MCF 10A (cell line): ENCODE measurements at regions of chr10 and their contacts with region 1.

Region 1: DNA sequence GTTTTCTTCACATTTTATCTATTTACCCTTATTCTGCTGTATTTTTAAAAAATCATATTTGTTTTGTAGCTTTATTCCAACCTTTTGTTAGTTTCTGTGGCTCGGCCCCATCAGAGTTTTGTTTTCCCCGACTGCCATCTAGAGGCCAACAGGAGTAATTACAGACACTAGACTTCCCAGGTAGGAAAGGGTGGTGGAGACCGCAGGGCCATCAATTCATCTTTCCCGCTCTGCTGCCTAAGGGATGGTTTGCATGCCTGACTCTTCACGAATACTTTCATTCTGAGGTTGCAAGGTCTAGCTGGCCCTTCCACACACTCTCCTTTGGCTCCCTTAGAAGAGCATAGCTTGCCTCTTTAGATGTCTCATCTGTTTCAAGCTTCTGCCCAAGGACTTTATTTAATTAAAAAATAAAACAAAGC is 38.3 kb downstream of the LYZL2 start:
- DNase-seq: peak; percentile 77
- H3K4me3 Mint-ChIP-seq: no peak overlapping the region
- H3K27ac Mint-ChIP-seq: no peak overlapping the region
- H3K4me1 Mint-ChIP-seq: no peaks in the 10 kb centered on the region
- H3K27me3 Mint-ChIP-seq: peaks cover 39% of the 10 kb centered on the region
- CTCF ChIP-seq: peak; percentile 56

Region 2: DNA sequence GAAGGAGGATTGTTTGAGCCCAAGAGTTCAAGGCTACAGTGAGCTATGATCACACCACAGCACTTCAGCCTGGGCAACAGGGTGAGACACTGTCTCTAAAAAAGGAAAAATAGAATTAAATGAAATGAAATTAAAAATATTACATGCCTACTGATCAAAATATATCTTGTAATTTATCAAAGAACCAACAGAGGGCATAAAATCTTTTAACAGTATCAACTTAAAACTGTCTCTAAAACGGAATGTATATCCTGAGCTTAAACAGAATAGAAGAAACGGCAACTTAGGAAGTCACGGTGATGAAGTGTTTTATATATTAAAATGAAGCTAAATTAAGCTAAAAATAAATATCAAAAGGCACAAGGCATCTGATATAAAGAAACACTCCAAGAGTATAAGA is 321.0 kb before region 1 on chr10:
- CTCF ChIA-PET with region 1: interaction called, 13 read pairs
- POLR2A ChIA-PET with region 1: no interaction called
- intact Hi-C with region 1: loop called (anchors 10 kb)
- DNase-seq: no peak
- H3K4me3 Mint-ChIP-seq: no peak overlapping the region
- H3K27ac Mint-ChIP-seq: no peak overlapping the region
- H3K4me1 Mint-ChIP-seq: no peaks in the 10 kb centered on the region
- H3K27me3 Mint-ChIP-seq: peaks cover 56% of the 10 kb centered on the region
- CTCF ChIP-seq: no peak

Region 3: GRCh38 chr10:30359373-30360206 is 231.7 kb before region 1 on chr10:
- CTCF ChIA-PET with region 1: interaction called, 12 read pairs
- POLR2A ChIA-PET with region 1: no interaction called
- intact Hi-C with region 1: loop called (anchors 1 kb)
- DNase-seq: peak; percentile 75
- H3K4me3 Mint-ChIP-seq: no peak overlapping the region
- H3K27ac Mint-ChIP-seq: no peak overlapping the region
- H3K4me1 Mint-ChIP-seq: peaks cover 20% of the 10 kb centered on the region
- H3K27me3 Mint-ChIP-seq: peaks cover 23% of the 10 kb centered on the region
- CTCF ChIP-seq: peak; percentile 81

Region 4: GRCh38 chr10:30392564-30392990 is 198.7 kb before region 1 on chr10:
- CTCF ChIA-PET with region 1: interaction called, 77 read pairs
- POLR2A ChIA-PET with region 1: interaction called, 4 read pairs
- intact Hi-C with region 1: loop called (anchors 1 kb)
- DNase-seq: peak; percentile 77
- H3K4me3 Mint-ChIP-seq: no peak overlapping the region
- H3K27ac Mint-ChIP-seq: no peak overlapping the region
- H3K4me1 Mint-ChIP-seq: peaks cover 14% of the 10 kb centered on the region
- H3K27me3 Mint-ChIP-seq: no peaks in the 10 kb centered on the region
- CTCF ChIP-seq: peak; percentile 98

Region 5: DNA sequence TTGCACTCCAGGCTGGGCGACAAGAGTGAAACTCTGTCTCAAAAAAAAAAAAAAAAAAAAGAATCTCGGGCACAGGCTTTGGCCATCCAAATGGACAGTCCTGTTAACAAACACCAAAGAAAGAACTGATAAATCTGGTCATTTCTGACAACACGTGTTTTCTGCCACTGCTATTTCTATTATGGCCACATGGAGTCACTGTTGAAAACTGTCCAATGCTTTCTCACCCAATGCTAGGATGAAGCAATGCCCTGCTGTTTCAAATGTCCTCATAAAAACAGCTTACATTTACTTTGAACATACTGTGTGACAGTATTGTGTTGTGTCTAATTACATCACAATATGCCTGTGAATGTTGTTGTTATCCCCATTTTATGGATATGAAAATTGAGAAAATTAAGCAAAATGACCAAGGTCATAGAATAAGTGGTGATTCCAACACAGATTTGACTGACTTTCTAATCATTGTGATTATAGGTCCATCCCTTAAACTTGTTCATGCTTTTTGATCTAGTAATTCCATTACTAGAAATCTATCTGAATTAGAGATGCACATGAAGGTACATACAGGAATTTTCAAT is 177.2 kb before region 1 on chr10:
- CTCF ChIA-PET with region 1: interaction called, 7 read pairs
- POLR2A ChIA-PET with region 1: no interaction called
- intact Hi-C with region 1: loop called (anchors 1 kb)
- DNase-seq: peak; percentile 76
- H3K4me3 Mint-ChIP-seq: no peak overlapping the region
- H3K27ac Mint-ChIP-seq: no peak overlapping the region
- H3K4me1 Mint-ChIP-seq: no peaks in the 10 kb centered on the region
- H3K27me3 Mint-ChIP-seq: no peaks in the 10 kb centered on the region
- CTCF ChIP-seq: peak; percentile 62

Region 6: GRCh38 chr10:30534465-30535144 is 56.7 kb before region 1 on chr10:
- CTCF ChIA-PET with region 1: interaction called, 6 read pairs
- POLR2A ChIA-PET with region 1: no interaction called
- intact Hi-C with region 1: loop called (anchors 2 kb)
- DNase-seq: peak; percentile 77
- H3K4me3 Mint-ChIP-seq: no peak overlapping the region
- H3K27ac Mint-ChIP-seq: no peak overlapping the region
- H3K4me1 Mint-ChIP-seq: peaks cover 6% of the 10 kb centered on the region
- H3K27me3 Mint-ChIP-seq: no peaks in the 10 kb centered on the region
- CTCF ChIP-seq: peak; percentile 79

Region 7: GRCh38 chr10:30645340-30645827 is 54.1 kb after region 1 on chr10:
- CTCF ChIA-PET with region 1: no interaction called
- POLR2A ChIA-PET with region 1: no interaction called
- intact Hi-C with region 1: no loop called
- DNase-seq: no peak
- H3K4me3 Mint-ChIP-seq: no peak overlapping the region
- H3K27ac Mint-ChIP-seq: no peak overlapping the region
- H3K4me1 Mint-ChIP-seq: peaks cover 8% of the 10 kb centered on the region
- H3K27me3 Mint-ChIP-seq: peaks cover 35% of the 10 kb centered on the region
- CTCF ChIP-seq: no peak

Region 8: DNA sequence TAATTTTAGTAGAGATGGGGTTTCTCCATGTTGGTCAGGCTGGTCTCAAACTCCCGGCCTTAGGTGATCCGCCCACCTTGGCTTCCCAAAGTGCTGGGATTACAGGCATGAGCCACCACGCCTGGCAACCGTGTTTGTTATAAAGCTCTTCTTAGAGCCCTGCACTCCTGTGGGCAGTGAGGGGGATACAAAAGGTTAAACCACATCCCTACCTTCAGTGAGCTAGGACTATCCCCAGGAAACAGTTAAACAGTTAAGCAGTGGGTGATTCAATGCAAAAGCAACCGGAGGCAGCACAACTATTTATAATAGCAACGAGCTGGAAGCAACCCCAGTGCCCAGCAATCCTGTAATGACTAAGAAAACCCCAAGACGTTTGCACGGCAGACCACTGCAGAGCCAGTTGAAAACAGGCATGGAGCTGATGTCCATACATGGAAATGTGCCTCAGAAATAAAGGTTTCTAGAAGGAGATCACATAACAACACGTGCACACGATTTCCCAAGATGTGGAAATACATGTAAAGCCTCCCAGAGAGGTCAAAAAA is 145.5 kb after region 1 on chr10:
- CTCF ChIA-PET with region 1: no interaction called
- POLR2A ChIA-PET with region 1: no interaction called
- intact Hi-C with region 1: no loop called
- DNase-seq: peak; percentile 84
- H3K4me3 Mint-ChIP-seq: no peak overlapping the region
- H3K27ac Mint-ChIP-seq: no peak overlapping the region
- H3K4me1 Mint-ChIP-seq: peaks cover 4% of the 10 kb centered on the region
- H3K27me3 Mint-ChIP-seq: no peaks in the 10 kb centered on the region
- CTCF ChIP-seq: no peak